ENCODE measurements at regions of chr22 and their contacts with region 1.

Region 1: DNA sequence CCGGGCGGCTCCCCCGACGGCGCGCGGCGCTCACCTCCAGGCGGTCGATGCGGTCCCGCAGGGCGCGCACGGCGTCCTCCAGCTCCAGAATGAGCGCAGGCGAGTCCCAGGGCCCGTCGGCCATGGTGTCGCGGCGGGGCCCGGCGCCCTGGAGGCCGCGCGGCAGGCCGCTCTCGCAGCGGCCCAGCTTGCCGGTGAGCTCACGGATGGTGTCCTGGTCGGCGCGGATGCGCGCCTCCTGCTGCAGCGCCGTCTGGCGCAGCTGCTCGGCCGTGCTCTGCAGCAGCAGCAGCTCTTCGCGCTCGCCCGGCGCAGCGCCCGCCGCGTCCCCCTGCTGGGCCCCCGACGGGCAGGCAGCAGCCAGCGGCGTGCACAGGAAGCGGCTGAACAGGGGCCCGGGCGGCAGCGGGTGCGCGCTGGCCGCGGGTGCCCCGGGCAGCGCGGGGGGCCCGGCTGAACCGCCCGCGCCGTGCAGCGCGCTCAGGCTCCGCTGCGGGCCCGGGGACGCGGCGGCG is 570 bp downstream of the NPTXR start:
- DNase-seq: peak; percentile 47 to 68
- H3K4me3 ChIP-seq: peak overlapping the region; percentile 48 to 70 (median 50)
- H3K27ac ChIP-seq: no peak overlapping the region
- H3K4me1 ChIP-seq: peaks cover 0 to 7% (median 3%) of the 10 kb centered on the region in 4 experiments; a peak in 4 of 7 replicates
- H3K27me3 ChIP-seq: peaks cover 16 to 47% (median 38%) of the 10 kb centered on the region in 4 experiments
- CTCF ChIP-seq: peak in 2 of 3 experiments; percentile 31 to 36; a peak in 3 of 4 replicates
- EP300 ChIP-seq: no peak
- POLR2A ChIP-seq: peak in 1 of 2 experiments; percentile 0; a peak in 1 of 3 replicates
- RAD21 ChIP-seq: peak in 1 of 2 experiments; percentile 7; a peak in 1 of 4 replicates

Region 2: GRCh38 chr22:38788021-38788816 is 55.0 kb before region 1 on chr22:
- CTCF ChIA-PET with region 1: no interaction called
- POLR2A ChIA-PET with region 1: no interaction called
- DNase-seq: no peak
- H3K4me3 ChIP-seq: no peak overlapping the region
- H3K27ac ChIP-seq: no peak overlapping the region
- H3K4me1 ChIP-seq: peaks cover 0 to 2% (median 0%) of the 10 kb centered on the region in 4 experiments; a peak in 1 of 7 replicates
- H3K27me3 ChIP-seq: no peaks in the 10 kb centered on the region; a peak in 1 of 7 replicates
- CTCF ChIP-seq: no peak
- EP300 ChIP-seq: no peak
- POLR2A ChIP-seq: no peak
- RAD21 ChIP-seq: no peak

Region 3: DNA sequence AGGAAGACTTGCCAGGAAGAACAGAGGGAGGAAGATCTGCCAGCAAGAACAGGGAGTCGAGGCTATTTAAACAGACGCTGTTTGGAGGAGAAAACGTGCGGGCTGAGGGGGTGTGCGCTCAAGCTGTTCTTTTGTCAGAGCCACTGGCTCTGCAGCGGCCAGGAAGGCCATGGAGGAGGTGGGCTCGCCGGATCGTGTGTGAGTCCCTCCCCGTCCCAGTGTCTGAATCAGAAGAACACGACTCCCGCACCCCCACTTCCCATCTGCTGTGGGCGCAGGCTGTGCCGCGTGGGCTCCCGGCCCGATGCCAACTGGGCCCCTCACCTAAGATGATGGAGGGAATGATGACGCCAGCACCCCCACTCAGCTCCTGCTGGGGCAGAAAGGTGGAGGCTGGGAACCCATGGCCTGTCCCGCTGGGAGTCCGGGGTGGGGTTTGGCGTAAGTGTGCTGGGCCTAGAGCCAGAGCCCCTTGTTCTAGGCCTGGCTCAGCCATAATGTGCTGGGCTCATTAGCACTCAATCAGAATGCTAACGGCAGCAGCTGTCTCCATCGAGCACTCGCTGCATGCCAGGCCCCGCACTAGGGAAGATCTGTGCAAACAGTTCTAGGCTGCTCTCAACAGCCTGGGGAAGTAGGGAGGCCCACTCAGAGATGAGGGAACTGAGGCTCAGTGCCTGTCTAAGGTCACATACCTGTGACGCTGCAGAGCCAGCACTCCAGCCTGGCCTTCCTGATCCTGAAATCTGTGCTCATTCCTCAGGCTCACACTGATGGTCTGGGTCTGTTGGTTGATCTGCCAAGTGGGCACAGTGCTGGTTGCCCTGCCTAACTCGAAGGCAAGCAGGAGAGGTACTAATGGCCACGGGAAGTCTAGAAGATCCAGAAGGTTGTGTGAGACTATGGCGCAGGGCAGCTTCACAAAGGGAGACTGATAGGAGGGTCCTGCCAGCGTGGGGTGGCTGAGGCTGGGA is 11.0 kb before region 1 on chr22:
- CTCF ChIA-PET with region 1: interaction called, 53 read pairs
- POLR2A ChIA-PET with region 1: interaction called, 5 read pairs
- DNase-seq: no peak
- H3K4me3 ChIP-seq: no peak overlapping the region
- H3K27ac ChIP-seq: no peak overlapping the region
- H3K4me1 ChIP-seq: peaks cover 0 to 11% (median 5%) of the 10 kb centered on the region in 4 experiments; a peak in 5 of 7 replicates
- H3K27me3 ChIP-seq: no peaks in the 10 kb centered on the region
- CTCF ChIP-seq: no peak
- EP300 ChIP-seq: no peak
- POLR2A ChIP-seq: no peak
- RAD21 ChIP-seq: no peak

Measured in H1 (cell line).